ENCODE measurements at regions of chr3 and their contacts with region 1.

Region 1: DNA sequence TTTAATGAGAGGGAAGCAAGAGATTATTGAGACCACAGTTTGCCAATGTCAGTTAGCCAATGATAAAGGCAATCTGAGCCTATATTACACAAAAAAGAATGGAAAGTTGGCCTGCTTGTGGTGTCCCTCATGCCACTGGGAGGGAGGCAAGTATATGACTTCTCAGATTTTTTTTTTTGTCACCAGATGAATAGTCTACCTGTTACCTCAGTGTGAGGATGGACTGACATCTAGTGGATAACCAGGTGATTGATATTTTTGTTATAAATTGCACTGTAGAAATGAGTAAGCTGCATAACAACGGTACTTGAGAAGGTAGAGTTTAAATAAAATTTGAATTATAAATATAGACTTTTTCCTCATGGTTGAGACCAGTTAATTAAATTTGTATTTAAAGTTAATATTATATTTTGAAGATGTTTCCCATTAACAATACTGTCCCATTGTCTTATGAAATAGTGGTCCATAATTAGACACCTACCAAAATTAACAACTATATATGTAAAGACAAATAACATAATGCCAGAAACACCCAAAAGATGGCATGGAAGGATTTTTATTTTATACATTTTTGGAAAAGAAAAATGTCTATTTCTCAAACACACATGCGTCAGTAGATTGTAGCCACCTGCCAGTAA is 237.8 kb upstream of the GADL1 start:
- DNase-seq: peak; percentile 62
- H3K4me3 ChIP-seq: no peak overlapping the region
- H3K27ac ChIP-seq: no peak overlapping the region
- H3K4me1 ChIP-seq: no peaks in the 10 kb centered on the region
- H3K27me3 ChIP-seq: no peaks in the 10 kb centered on the region
- CTCF ChIP-seq: peak; percentile 63

Region 2: GRCh38 chr3:30012941-30013543 is 1119.2 kb before region 1 on chr3:
- CTCF ChIA-PET with region 1: no interaction called
- POLR2A ChIA-PET with region 1: no interaction called
- intact Hi-C with region 1: loop called (anchors 10 kb)
- DNase-seq: peak; percentile 92
- H3K4me3 ChIP-seq: no peak overlapping the region
- H3K27ac ChIP-seq: no peak overlapping the region
- H3K4me1 ChIP-seq: peaks cover 24% of the 10 kb centered on the region
- H3K27me3 ChIP-seq: no peaks in the 10 kb centered on the region
- CTCF ChIP-seq: peak; percentile 87

Region 3: GRCh38 chr3:30768703-30769685 is 363.3 kb before region 1 on chr3:
- CTCF ChIA-PET with region 1: interaction called, 8 read pairs
- POLR2A ChIA-PET with region 1: no interaction called
- intact Hi-C with region 1: loop called (anchors 2 kb)
- DNase-seq: peak; percentile 80
- H3K4me3 ChIP-seq: no peak overlapping the region
- H3K27ac ChIP-seq: no peak overlapping the region
- H3K4me1 ChIP-seq: peaks cover 16% of the 10 kb centered on the region
- H3K27me3 ChIP-seq: no peaks in the 10 kb centered on the region
- CTCF ChIP-seq: peak; percentile 90

Measured in A673 (cell line).